ENCODE measurements at regions of chr20 and their contacts with region 1.

Region 1: DNA sequence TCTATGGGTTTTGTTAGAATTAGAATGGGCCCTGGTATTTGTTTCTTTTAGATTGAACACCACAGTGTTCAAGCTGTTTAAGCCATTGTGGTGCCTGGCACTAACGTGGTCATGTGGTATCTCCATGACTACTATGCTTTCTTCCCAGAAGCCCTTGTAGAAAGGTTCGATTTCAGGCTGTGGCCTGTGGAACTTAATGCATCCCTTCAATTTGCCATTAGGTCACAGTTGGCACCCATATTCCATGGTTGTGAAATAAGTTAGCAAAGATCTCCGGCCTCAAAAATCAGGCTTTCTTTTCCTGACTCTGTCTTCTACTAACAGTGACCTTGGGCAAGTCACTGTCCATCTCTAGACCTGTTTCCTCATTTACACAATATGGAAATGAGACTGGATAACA is 31.3 kb upstream of the AAR2 start:
- DNase-seq: no peak
- H3K4me3 ChIP-seq: no peak overlapping the region
- H3K27ac ChIP-seq: no peak overlapping the region
- H3K4me1 ChIP-seq: no peaks in the 10 kb centered on the region
- H3K27me3 ChIP-seq: no peaks in the 10 kb centered on the region
- CTCF ChIP-seq: no peak

Region 2: DNA sequence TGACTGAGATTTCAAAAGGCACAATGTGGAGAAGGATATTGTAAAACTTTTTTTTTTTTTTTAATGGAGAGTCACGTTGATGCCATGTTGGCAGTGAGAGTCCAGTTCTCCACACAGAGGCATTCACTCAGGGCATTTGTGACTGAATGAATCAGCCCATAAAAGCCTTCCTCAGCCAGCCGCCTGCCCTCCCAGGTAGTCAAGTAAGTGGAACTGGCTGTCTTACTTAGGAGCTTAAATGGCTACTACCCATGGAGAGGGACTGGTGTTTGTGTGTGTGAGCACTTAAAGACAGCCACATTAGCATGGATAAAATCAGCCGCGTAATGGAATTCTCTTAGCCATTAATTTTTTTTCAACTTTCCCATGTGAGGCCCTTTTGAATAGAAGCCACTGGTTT is 43.8 kb after region 1 on chr20:
- CTCF ChIA-PET with region 1: interaction called, 17 read pairs
- POLR2A ChIA-PET with region 1: no interaction called
- intact Hi-C with region 1: no loop called
- DNase-seq: no peak
- H3K4me3 ChIP-seq: no peak overlapping the region
- H3K27ac ChIP-seq: no peak overlapping the region
- H3K4me1 ChIP-seq: no peaks in the 10 kb centered on the region
- H3K27me3 ChIP-seq: no peaks in the 10 kb centered on the region
- CTCF ChIP-seq: no peak

Region 3: DNA sequence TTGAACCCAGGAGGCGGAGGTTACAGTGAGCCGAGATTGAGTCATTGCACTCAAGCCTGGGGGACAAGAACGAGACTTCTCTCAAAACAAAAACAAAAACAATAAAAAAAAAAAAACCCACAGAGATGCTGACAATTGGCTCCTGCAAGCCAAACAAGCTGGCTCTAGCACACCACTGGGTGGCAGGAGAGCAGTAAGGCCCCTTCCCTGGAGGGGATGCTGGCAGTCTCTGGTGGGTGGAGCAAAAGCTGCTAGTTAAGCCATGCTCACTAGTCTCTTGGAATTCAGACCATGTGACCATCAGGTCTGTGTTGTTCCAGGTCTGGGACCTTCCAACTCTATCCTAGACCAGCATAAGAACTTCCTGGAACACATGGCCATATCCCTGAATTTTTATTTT is 587.4 kb after region 1 on chr20:
- CTCF ChIA-PET with region 1: no interaction called
- POLR2A ChIA-PET with region 1: interaction called, 16 read pairs
- intact Hi-C with region 1: no loop called
- DNase-seq: peak; percentile 85 to 87
- H3K4me3 ChIP-seq: no peak overlapping the region
- H3K27ac ChIP-seq: no peak overlapping the region
- H3K4me1 ChIP-seq: no peaks in the 10 kb centered on the region
- H3K27me3 ChIP-seq: no peaks in the 10 kb centered on the region
- CTCF ChIP-seq: peak; percentile 66